ENCODE measurements at regions of chr1 and their contacts with region 1.

Region 1: GRCh38 chr1:169485544-169486278 is at the start of gene SLC19A2:
- DNase-seq: peak; percentile 100
- ATAC-seq: peak; percentile 99
- H3K4me3 ChIP-seq: peak within 1 kb of the TSS; percentile 52 to 87
- H3K27ac ChIP-seq: peak within 1 kb of the TSS; percentile 87 to 99
- H3K4me1 ChIP-seq: peaks cover 3 to 4% of the 10 kb centered on the region in 2 donors
- H3K27me3 ChIP-seq: no peaks in the 10 kb centered on the region
- total RNA-seq, gene SLC19A2: 8.7 to 26.9 TPM

Region 2: DNA sequence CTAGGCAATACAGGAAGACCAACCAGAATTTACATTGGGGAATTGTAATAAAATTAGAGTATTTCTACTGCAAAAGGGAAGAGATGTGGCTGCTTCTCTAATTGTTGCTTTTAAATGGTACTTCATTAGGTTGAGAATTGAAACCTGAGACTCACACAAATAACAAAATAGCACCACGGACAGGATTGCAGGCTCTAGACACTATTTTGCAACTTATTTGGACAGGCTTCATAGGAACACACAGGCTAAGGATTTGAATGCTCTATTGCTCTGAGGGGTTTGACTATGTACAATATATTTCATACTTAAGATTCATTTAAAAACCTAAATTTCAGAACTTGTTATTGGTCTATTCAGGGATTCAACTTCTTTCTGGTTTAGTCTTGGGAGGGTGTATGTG is 299.6 kb before region 1 on chr1:
- intact Hi-C with region 1: no loop called
- DNase-seq: no peak
- ATAC-seq: no peak
- H3K4me3 ChIP-seq: no peak overlapping the region
- H3K27ac ChIP-seq: no peak overlapping the region
- H3K4me1 ChIP-seq: no peaks in the 10 kb centered on the region
- H3K27me3 ChIP-seq: no peaks in the 10 kb centered on the region

Region 3: GRCh38 chr1:169367486-169368405 is 118.0 kb before region 1 on chr1 and contains the starts of genes BLZF1 and NME7:
- intact Hi-C with region 1: loop called in 1 of 2 experiments (anchors 5 kb)
- DNase-seq: peak; percentile 98 to 99
- ATAC-seq: peak; percentile 99
- H3K4me3 ChIP-seq: peak within 1 kb of the TSS; percentile 68 to 99
- H3K27ac ChIP-seq: peak within 1 kb of the TSS; percentile 7 to 79
- H3K4me1 ChIP-seq: peaks cover 0 to 14% of the 10 kb centered on the region in 2 donors
- H3K27me3 ChIP-seq: no peaks in the 10 kb centered on the region
- total RNA-seq, gene BLZF1: 26.7 to 27.3 TPM
- total RNA-seq, gene NME7: 13.3 to 23.5 TPM

Region 4: DNA sequence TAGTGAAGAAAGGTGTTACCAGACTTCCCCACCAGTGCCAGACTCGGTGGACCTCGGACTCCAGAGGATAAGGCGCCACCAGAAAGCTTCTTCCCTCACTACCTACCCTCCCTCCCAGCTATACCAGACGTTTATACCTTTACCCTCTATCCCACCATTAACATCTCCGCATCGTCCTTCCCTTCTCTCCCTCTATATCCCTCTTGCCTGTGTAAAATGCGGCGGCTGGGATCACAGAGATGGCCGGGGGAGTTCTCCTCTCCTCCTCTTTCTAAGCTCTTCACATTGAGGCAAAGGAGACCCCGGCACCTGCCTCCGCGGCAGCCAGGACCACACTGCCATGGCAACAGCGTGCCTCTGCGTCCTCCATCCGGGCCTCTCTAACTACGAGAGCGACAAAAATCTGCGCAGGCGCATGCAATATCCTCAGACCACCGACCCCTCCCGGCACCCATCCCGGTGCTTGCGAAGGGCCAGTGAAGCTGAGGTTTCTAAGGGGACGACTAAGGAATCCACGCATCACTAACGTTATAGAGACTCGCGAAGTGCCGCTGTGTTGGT is 58.5 kb before region 1 on chr1 and contains the start of gene CCDC181:
- intact Hi-C with region 1: no loop called
- DNase-seq: peak; percentile 56 to 82
- ATAC-seq: peak; percentile 70
- H3K4me3 ChIP-seq: peak within 1 kb of the TSS; percentile 18 to 67
- H3K27ac ChIP-seq: no peak within 1 kb of the TSS
- H3K4me1 ChIP-seq: no peaks in the 10 kb centered on the region
- H3K27me3 ChIP-seq: no peaks in the 10 kb centered on the region
- total RNA-seq, gene CCDC181: 0.48 to 0.97 TPM